Left colon (tissue), 2 donors: ENCODE measurements at regions of chr1 and their contacts with region 1.

Region 1: DNA sequence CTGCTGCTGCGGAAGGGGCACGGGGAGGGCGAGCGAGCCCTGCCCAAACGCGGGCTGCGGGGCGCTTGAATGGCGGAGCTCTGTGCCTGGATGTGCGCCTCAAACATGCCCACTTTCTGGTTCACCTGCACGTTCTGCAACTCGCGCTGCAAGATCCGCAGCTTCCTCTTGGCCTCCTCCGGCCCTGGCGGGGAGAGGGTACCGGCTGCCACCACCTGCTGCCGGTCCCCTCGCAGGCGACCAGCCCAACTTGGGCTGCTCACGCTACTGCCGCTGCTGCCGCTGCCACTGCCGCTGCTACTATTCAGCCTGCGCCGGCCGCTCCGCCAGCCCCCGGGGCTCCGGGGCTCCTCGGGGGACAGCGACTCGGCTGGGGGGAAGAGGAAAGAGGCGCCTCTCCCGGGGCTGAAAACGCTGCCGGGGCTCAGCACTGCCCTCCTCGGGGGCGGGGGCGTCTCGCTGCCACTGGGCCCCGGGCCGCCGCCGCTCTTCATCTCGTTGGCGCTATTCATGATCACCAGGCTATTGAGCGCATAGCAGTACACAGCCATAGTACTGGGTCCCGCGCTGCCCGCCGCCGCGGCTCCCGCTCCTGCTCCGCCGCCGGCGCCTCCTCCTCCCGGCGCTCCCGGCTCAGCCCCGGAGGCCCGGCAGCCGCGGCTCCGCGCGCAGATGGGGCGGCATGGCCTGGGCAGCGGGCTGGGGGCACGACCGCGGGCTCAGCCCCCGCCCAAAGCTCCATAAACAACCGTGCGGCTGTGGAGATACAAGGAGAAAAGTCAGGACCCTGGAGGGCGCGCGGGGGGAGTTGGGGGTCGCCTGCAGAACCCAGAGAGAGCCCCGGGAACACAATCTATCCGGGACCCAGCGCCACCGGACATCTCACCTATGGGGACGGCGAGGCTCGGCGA is 1.9 kb downstream of the ITPKB start:
- DNase-seq: peak in 1 of 2 donors; percentile 66
- ATAC-seq: peak; percentile 44

Region 2: DNA sequence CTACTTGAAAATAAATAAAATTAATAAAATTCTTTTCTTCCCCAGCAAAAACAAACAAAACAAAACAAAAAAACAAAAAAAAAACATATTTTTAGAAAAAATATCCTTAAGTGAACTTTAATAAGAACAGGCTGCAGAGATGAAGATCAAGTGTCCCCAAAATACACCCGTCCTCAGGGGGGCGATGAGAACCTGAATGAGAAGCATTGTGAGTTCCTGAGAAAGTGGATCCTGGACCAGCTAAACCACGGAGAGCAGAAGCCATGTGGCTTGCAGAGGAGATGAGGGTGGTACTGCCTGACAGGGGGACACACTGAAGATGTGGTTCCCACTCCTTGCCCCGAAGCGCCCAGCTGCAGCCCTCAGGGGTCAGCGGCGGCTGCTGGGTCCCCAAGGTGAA is 87.4 kb before region 1 on chr1:
- intact Hi-C with region 1: loop called in 1 of 2 experiments (anchors 5 kb)
- DNase-seq: no peak
- ATAC-seq: no peak